MCF 10A (cell line): ENCODE measurements at regions of chr22 and their contacts with region 1.

Region 1: GRCh38 chr22:40533712-40534378 is 102.7 kb downstream of the MRTFA start:
- DNase-seq: peak; percentile 87
- H3K4me3 Mint-ChIP-seq: peak overlapping the region; percentile 68
- H3K27ac Mint-ChIP-seq: peak overlapping the region; percentile 24
- H3K4me1 Mint-ChIP-seq: peaks cover 36% of the 10 kb centered on the region
- H3K27me3 Mint-ChIP-seq: no peaks in the 10 kb centered on the region
- CTCF ChIP-seq: no peak

Region 2: GRCh38 chr22:40487663-40488249 is 46.1 kb before region 1 on chr22:
- CTCF ChIA-PET with region 1: interaction called, 5 read pairs
- POLR2A ChIA-PET with region 1: interaction called, 12 read pairs
- intact Hi-C with region 1: no loop called
- DNase-seq: peak; percentile 54
- H3K4me3 Mint-ChIP-seq: no peak overlapping the region
- H3K27ac Mint-ChIP-seq: peak overlapping the region; percentile 94
- H3K4me1 Mint-ChIP-seq: peaks cover 39% of the 10 kb centered on the region
- H3K27me3 Mint-ChIP-seq: no peaks in the 10 kb centered on the region
- CTCF ChIP-seq: peak; percentile 55

Region 3: GRCh38 chr22:40519284-40519947 is 14.4 kb before region 1 on chr22:
- CTCF ChIA-PET with region 1: interaction called, 16 read pairs
- POLR2A ChIA-PET with region 1: interaction called, 31 read pairs
- intact Hi-C with region 1: no loop called
- DNase-seq: no peak
- H3K4me3 Mint-ChIP-seq: no peak overlapping the region
- H3K27ac Mint-ChIP-seq: no peak overlapping the region
- H3K4me1 Mint-ChIP-seq: peaks cover 23% of the 10 kb centered on the region
- H3K27me3 Mint-ChIP-seq: no peaks in the 10 kb centered on the region
- CTCF ChIP-seq: no peak

Region 4: GRCh38 chr22:40588726-40589125 is 54.9 kb after region 1 on chr22:
- CTCF ChIA-PET with region 1: no interaction called
- POLR2A ChIA-PET with region 1: interaction called, 11 read pairs
- intact Hi-C with region 1: no loop called
- DNase-seq: peak; percentile 89
- H3K4me3 Mint-ChIP-seq: no peak overlapping the region
- H3K27ac Mint-ChIP-seq: peak overlapping the region; percentile 63
- H3K4me1 Mint-ChIP-seq: peaks cover 38% of the 10 kb centered on the region
- H3K27me3 Mint-ChIP-seq: no peaks in the 10 kb centered on the region
- CTCF ChIP-seq: no peak

Region 5: GRCh38 chr22:40628354-40629042 is 94.7 kb after region 1 on chr22:
- CTCF ChIA-PET with region 1: interaction called, 4 read pairs
- POLR2A ChIA-PET with region 1: interaction called, 12 read pairs
- intact Hi-C with region 1: no loop called
- DNase-seq: peak; percentile 68
- H3K4me3 Mint-ChIP-seq: peak overlapping the region; percentile 30
- H3K27ac Mint-ChIP-seq: peak overlapping the region; percentile 65
- H3K4me1 Mint-ChIP-seq: peaks cover 39% of the 10 kb centered on the region
- H3K27me3 Mint-ChIP-seq: no peaks in the 10 kb centered on the region
- CTCF ChIP-seq: no peak

Region 6: GRCh38 chr22:40645579-40646197 is 111.8 kb after region 1 on chr22:
- CTCF ChIA-PET with region 1: interaction called, 10 read pairs
- POLR2A ChIA-PET with region 1: interaction called, 25 read pairs
- intact Hi-C with region 1: no loop called
- DNase-seq: no peak
- H3K4me3 Mint-ChIP-seq: no peak overlapping the region
- H3K27ac Mint-ChIP-seq: peak overlapping the region; percentile 54
- H3K4me1 Mint-ChIP-seq: peaks cover 13% of the 10 kb centered on the region
- H3K27me3 Mint-ChIP-seq: no peaks in the 10 kb centered on the region
- CTCF ChIP-seq: no peak